ENCODE measurements at regions of chr16 and their contacts with region 1.

Region 1: GRCh38 chr16:89641458-89642119 is 15.9 kb downstream of the CHMP1A start:
- DNase-seq: no peak
- ATAC-seq: no peak
- H3K4me3 ChIP-seq: no peak overlapping the region
- H3K27ac ChIP-seq: no peak overlapping the region
- H3K4me1 ChIP-seq: peaks cover 8 to 23% of the 10 kb centered on the region in 2 experiments; a peak in 3 of 4 replicates
- H3K27me3 ChIP-seq: no peaks in the 10 kb centered on the region
- CTCF ChIP-seq: no peak
- POLR2A ChIP-seq: no peak
- RAD21 ChIP-seq: no peak

Region 2: GRCh38 chr16:89574681-89575246 is 66.8 kb before region 1 on chr16:
- CTCF ChIA-PET with region 1: no interaction called
- POLR2A ChIA-PET with region 1: no interaction called
- RAD21 ChIA-PET with region 1: interaction called in 1 of 2 experiments, 3 read pairs
- intact Hi-C with region 1: loop called (anchors 1 kb)
- DNase-seq: peak; percentile 57
- ATAC-seq: peak; percentile 83
- H3K4me3 ChIP-seq: peak overlapping the region; percentile 71 to 97
- H3K27ac ChIP-seq: peak overlapping the region; percentile 99
- H3K4me1 ChIP-seq: peaks cover 14 to 35% of the 10 kb centered on the region in 2 experiments
- H3K27me3 ChIP-seq: no peaks in the 10 kb centered on the region
- CTCF ChIP-seq: peak in 2 of 3 experiments; percentile 90 to 91; a peak in 4 of 6 replicates
- POLR2A ChIP-seq: peak; percentile 26
- RAD21 ChIP-seq: no peak

Region 3: GRCh38 chr16:89602273-89602951 is 39.2 kb before region 1 on chr16:
- CTCF ChIA-PET with region 1: interaction called, 6 read pairs
- POLR2A ChIA-PET with region 1: no interaction called
- RAD21 ChIA-PET with region 1: interaction called in 1 of 2 experiments, 10 read pairs
- intact Hi-C with region 1: loop called (anchors 1 kb)
- DNase-seq: peak; percentile 24
- ATAC-seq: peak; percentile 71
- H3K4me3 ChIP-seq: peak overlapping the region; percentile 19 to 49
- H3K27ac ChIP-seq: peak overlapping the region; percentile 43
- H3K4me1 ChIP-seq: peaks cover 28 to 52% of the 10 kb centered on the region in 2 experiments
- H3K27me3 ChIP-seq: no peaks in the 10 kb centered on the region
- CTCF ChIP-seq: no peak
- POLR2A ChIP-seq: no peak
- RAD21 ChIP-seq: no peak

Region 4: GRCh38 chr16:89615596-89616090 is 25.9 kb before region 1 on chr16:
- CTCF ChIA-PET with region 1: interaction called, 4 read pairs
- POLR2A ChIA-PET with region 1: no interaction called
- RAD21 ChIA-PET with region 1: interaction called, 3 to 4 read pairs
- intact Hi-C with region 1: loop called (anchors 1 kb)
- DNase-seq: no peak
- ATAC-seq: peak; percentile 85
- H3K4me3 ChIP-seq: no peak overlapping the region
- H3K27ac ChIP-seq: no peak overlapping the region
- H3K4me1 ChIP-seq: peaks cover 7 to 15% of the 10 kb centered on the region in 2 experiments; a peak in 3 of 4 replicates
- H3K27me3 ChIP-seq: no peaks in the 10 kb centered on the region
- CTCF ChIP-seq: peak; percentile 77 to 94 (median 93)
- POLR2A ChIP-seq: no peak
- RAD21 ChIP-seq: no peak; the same call in 1 of the 2 replicates